ENCODE measurements at regions of chr11 and their contacts with region 1.

Region 1: GRCh38 chr11:18321980-18322711 is at the starts of genes GTF2H1 and HPS5:
- DNase-seq: peak; percentile 97
- H3K4me3 Mint-ChIP-seq: peak within 1 kb of the TSS; percentile 97
- H3K27ac Mint-ChIP-seq: peak within 1 kb of the TSS; percentile 100
- H3K4me1 Mint-ChIP-seq: peaks cover 66% of the 10 kb centered on the region
- H3K27me3 Mint-ChIP-seq: no peaks in the 10 kb centered on the region
- total RNA-seq, gene GTF2H1: 37.3 to 39.5 TPM
- total RNA-seq, gene HPS5: 19.9 to 20.9 TPM

Region 2: GRCh38 chr11:18012863-18013781 is 309.0 kb before region 1 on chr11 and contains the start of gene SERGEF:
- CTCF ChIA-PET with region 1: no interaction called
- POLR2A ChIA-PET with region 1: no interaction called
- intact Hi-C with region 1: loop called (anchors 5 kb)
- DNase-seq: peak; percentile 95
- H3K4me3 Mint-ChIP-seq: peak within 1 kb of the TSS; percentile 93
- H3K27ac Mint-ChIP-seq: peak within 1 kb of the TSS; percentile 88
- H3K4me1 Mint-ChIP-seq: peaks cover 40% of the 10 kb centered on the region
- H3K27me3 Mint-ChIP-seq: no peaks in the 10 kb centered on the region
- total RNA-seq, gene SERGEF: 42.7 to 44.2 TPM

Region 3: GRCh38 chr11:18243783-18244362 is 78.3 kb before region 1 on chr11:
- CTCF ChIA-PET with region 1: interaction called, 14 read pairs
- POLR2A ChIA-PET with region 1: interaction called, 3 read pairs
- intact Hi-C with region 1: loop called (anchors 1 kb)
- DNase-seq: peak; percentile 73
- H3K4me3 Mint-ChIP-seq: no peak overlapping the region
- H3K27ac Mint-ChIP-seq: no peak overlapping the region
- H3K4me1 Mint-ChIP-seq: peaks cover 16% of the 10 kb centered on the region
- H3K27me3 Mint-ChIP-seq: peaks cover 7% of the 10 kb centered on the region

Region 4: GRCh38 chr11:18383388-18384156 is 61.4 kb after region 1 on chr11:
- CTCF ChIA-PET with region 1: interaction called, 4 read pairs
- POLR2A ChIA-PET with region 1: interaction called, 24 read pairs
- intact Hi-C with region 1: loop called (anchors 1 kb)
- DNase-seq: peak; percentile 92
- H3K4me3 Mint-ChIP-seq: peak overlapping the region; percentile 59
- H3K27ac Mint-ChIP-seq: peak overlapping the region; percentile 99
- H3K4me1 Mint-ChIP-seq: peaks cover 43% of the 10 kb centered on the region
- H3K27me3 Mint-ChIP-seq: no peaks in the 10 kb centered on the region

Region 5: GRCh38 chr11:18471995-18472394 is 149.8 kb after region 1 on chr11:
- CTCF ChIA-PET with region 1: no interaction called
- POLR2A ChIA-PET with region 1: no interaction called
- intact Hi-C with region 1: no loop called
- DNase-seq: peak; percentile 69
- H3K4me3 Mint-ChIP-seq: no peak overlapping the region
- H3K27ac Mint-ChIP-seq: no peak overlapping the region
- H3K4me1 Mint-ChIP-seq: peaks cover 18% of the 10 kb centered on the region
- H3K27me3 Mint-ChIP-seq: no peaks in the 10 kb centered on the region

Region 6: GRCh38 chr11:18588297-18589252 is 266.4 kb after region 1 on chr11 and contains the start of gene UEVLD:
- CTCF ChIA-PET with region 1: no interaction called
- POLR2A ChIA-PET with region 1: no interaction called
- intact Hi-C with region 1: loop called (anchors 1 kb)
- DNase-seq: peak; percentile 81
- H3K4me3 Mint-ChIP-seq: no peak within 1 kb of the TSS
- H3K27ac Mint-ChIP-seq: no peak within 1 kb of the TSS
- H3K4me1 Mint-ChIP-seq: peaks cover 10% of the 10 kb centered on the region
- H3K27me3 Mint-ChIP-seq: no peaks in the 10 kb centered on the region
- total RNA-seq, gene UEVLD: 20.9 to 26.2 TPM

Region 7: DNA sequence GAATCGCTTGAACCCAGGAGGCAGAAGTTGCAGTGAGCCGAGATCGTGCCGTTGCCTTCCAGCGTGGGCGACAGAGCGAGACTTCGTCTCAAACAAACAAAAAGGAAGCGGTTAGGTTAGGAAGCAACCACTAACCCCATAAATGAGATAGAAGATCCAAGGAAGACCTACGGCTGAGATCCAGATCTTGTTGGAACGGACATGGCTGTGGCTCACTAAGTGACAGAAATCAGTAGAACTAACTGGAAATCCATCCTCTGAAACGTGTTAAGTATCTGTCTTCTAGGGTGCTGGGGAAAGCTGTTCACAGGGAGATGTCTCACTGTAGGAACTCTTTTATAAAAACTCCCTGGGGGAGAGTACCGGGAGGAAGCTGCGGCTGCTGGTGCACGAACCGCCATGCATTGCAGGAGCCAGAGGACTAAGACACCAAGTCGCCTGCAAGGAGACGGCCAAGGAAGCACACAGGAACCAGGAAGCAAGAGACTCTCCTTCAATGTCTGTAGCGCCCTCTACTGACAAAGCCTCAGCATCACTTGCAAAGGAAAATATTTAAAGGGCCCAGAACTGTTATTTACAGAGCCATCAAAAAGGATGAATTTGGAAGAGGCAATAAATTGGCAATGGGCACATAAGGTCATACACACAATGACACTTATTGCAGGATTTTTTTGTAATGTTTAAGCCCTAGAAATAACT is 328.9 kb after region 1 on chr11:
- CTCF ChIA-PET with region 1: no interaction called
- POLR2A ChIA-PET with region 1: no interaction called
- intact Hi-C with region 1: no loop called
- DNase-seq: peak; percentile 58
- H3K4me3 Mint-ChIP-seq: peak overlapping the region; percentile 17
- H3K27ac Mint-ChIP-seq: no peak overlapping the region
- H3K4me1 Mint-ChIP-seq: peaks cover 4% of the 10 kb centered on the region
- H3K27me3 Mint-ChIP-seq: no peaks in the 10 kb centered on the region